ENCODE measurements at regions of chr6 and their contacts with region 1.

Region 1: GRCh38 chr6:135135835-135136234 is 45.3 kb upstream of the MYB start:
- DNase-seq: no peak
- H3K4me3 ChIP-seq: no peak overlapping the region
- H3K27ac ChIP-seq: no peak overlapping the region
- H3K4me1 ChIP-seq: no peaks in the 10 kb centered on the region
- H3K27me3 ChIP-seq: no peaks in the 10 kb centered on the region
- CTCF ChIP-seq: no peak
- POLR2A ChIP-seq: no peak

Region 2: DNA sequence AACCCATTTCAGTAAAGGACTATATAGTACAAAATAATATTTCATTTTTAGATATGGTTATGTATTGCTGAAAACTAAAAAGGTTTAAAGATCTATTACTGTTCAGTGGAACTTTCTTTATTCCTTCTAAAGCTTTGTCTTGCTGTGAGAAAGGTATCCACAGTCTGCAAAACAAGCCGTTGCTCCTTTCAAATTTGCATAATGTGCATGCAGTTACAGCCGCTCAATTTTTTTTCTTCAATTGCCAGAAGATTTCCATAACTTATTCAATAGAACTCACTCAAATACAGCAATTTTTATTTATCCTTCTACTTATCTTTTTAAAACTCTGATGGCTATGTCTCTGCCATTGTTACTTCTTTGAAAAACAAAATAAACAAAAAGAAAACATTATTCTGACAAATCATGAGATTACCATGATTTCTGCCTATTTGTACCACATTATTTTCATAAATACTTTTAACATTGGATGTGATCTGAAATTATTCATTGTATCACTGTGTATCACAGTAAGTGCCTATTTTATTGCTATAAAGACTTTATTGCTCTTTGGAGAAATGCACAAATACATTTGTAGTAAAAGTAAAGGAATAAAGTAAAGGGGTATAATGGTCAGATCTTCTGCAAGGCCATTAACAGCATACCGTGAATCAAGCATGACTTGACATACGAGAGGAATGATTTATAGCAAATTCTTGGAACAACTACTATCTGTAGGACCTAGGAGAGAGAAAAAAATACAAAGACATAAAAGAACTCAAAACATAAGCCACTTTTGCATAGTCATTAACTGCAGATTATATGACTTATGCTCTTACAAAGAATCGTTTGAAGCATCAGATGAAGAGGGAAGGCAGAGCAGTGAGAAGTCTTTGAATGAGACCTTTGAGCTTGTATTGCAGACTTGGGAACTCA is 51.6 kb before region 1 on chr6:
- intact Hi-C with region 1: no loop called
- DNase-seq: no peak
- H3K4me3 ChIP-seq: no peak overlapping the region
- H3K27ac ChIP-seq: no peak overlapping the region
- H3K4me1 ChIP-seq: no peaks in the 10 kb centered on the region
- H3K27me3 ChIP-seq: no peaks in the 10 kb centered on the region
- CTCF ChIP-seq: no peak
- POLR2A ChIP-seq: no peak

Region 3: GRCh38 chr6:135411339-135411738 is 275.5 kb after region 1 on chr6:
- intact Hi-C with region 1: loop called (anchors 10 kb)
- DNase-seq: no peak
- H3K4me3 ChIP-seq: no peak overlapping the region
- H3K27ac ChIP-seq: no peak overlapping the region
- H3K4me1 ChIP-seq: no peaks in the 10 kb centered on the region
- H3K27me3 ChIP-seq: no peaks in the 10 kb centered on the region
- CTCF ChIP-seq: peak in 1 of 3 donors; percentile 11
- POLR2A ChIP-seq: no peak

Region 4: DNA sequence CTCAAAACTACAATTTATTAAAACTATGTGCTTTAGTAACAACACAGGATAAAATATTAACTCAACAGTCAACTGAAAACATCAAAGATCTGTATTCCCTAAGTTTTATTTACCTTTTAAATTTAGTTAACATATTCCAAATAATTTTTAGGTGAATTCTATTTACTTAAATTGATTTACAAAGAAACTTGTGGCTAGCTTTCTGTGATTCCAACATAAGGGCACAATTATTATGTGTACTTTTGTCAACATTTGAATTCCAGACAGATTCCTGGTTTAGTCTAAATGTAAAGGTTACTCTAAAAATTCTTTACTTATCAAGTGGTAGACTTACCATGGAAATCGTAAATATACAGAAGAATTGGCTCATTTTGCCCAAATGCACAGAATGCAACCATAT is 291.0 kb after region 1 on chr6:
- intact Hi-C with region 1: no loop called
- DNase-seq: no peak
- H3K4me3 ChIP-seq: no peak overlapping the region
- H3K27ac ChIP-seq: no peak overlapping the region
- H3K4me1 ChIP-seq: no peaks in the 10 kb centered on the region
- H3K27me3 ChIP-seq: no peaks in the 10 kb centered on the region
- CTCF ChIP-seq: no peak
- POLR2A ChIP-seq: no peak

Region 5: DNA sequence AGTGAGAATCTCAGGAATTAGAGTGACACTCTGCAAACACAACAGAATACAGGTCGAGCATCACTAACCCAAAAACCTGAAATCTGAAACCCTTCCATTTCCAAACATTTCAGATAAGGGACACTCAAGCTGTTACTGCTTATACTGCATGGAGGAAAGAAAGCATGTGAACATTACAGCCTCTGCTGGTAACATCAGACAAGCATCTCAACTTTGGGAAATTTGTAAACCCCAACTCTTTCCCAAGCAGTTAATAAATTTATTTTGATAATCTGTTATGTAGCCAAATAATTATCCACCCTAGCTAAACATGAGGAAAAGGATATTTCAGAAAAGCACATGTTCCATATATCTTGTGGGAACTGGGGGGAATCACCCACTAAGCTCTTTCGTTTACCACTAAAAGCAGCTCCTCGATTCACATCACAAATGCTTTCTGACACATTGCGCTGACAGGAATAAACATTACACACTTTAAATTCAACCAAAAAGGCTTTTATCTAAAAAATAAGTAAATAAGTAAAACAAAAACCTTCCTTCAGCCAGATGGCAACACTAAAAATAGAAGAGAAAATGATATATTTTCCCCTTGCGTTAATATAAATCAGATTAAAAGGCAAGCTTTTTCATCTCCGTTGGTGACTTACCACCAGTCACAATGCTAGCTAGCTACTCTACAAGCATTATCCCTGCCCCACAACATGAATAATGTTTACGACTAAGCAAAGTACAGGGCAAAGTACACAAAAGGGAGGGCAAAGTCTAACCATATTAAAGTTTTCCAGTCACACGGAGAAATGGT is 1293.6 kb after region 1 on chr6:
- intact Hi-C with region 1: loop called (anchors 10 kb)
- DNase-seq: no peak
- H3K4me3 ChIP-seq: no peak overlapping the region
- H3K27ac ChIP-seq: no peak overlapping the region
- H3K4me1 ChIP-seq: no peaks in the 10 kb centered on the region
- H3K27me3 ChIP-seq: no peaks in the 10 kb centered on the region
- CTCF ChIP-seq: no peak
- POLR2A ChIP-seq: no peak